ENCODE measurements at regions of chr19 and their contacts with region 1.

Region 1: GRCh38 chr19:10717356-10718204 is at the start of gene DNM2:
- DNase-seq: peak; percentile 99
- ATAC-seq: peak; percentile 93
- H3K4me3 Mint-ChIP-seq: peak within 1 kb of the TSS; percentile 98
- H3K27ac Mint-ChIP-seq: peak within 1 kb of the TSS; percentile 90
- H3K4me1 Mint-ChIP-seq: peaks cover 33% of the 10 kb centered on the region
- H3K27me3 Mint-ChIP-seq: no peaks in the 10 kb centered on the region
- total RNA-seq, gene DNM2: 267 to 315 TPM

Region 2: DNA sequence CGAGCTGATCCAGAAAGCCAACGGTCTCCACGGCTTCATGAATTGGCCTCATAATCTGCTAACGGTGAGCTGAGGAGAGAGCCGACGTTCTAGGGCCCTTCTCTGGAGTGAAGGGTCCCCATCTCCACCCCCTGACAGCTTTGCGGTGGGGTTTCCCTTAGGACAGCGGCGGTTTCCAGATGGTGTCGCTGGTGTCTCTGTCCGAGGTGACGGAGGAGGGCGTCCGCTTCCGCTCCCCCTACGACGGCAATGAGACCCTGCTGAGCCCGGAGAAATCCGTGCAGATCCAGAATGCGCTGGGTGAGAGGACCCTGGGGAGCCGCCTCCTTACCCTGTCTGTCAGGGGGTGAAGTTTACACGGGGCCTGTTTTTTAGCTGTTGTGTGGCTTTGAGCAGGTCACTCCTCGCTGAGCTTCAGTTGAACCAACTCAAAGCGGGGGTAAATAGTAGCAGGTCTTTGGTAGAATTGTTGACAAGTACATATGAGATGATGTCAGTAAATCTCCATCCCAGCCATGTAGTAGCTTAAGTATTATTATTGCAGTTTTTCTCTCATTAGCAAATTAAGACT is 15.5 kb before region 1 on chr19:
- CTCF ChIA-PET with region 1: interaction called, 26 read pairs
- DNase-seq: peak; percentile 62
- ATAC-seq: peak; percentile 35
- H3K4me3 Mint-ChIP-seq: peak overlapping the region; percentile 79
- H3K27ac Mint-ChIP-seq: peak overlapping the region; percentile 78
- H3K4me1 Mint-ChIP-seq: peaks cover 13% of the 10 kb centered on the region
- H3K27me3 Mint-ChIP-seq: peaks cover 7% of the 10 kb centered on the region

Region 3: GRCh38 chr19:10769533-10770491 is 52.2 kb after region 1 on chr19:
- CTCF ChIA-PET with region 1: interaction called, 32 read pairs
- DNase-seq: no peak
- ATAC-seq: no peak
- H3K4me3 Mint-ChIP-seq: no peak overlapping the region
- H3K27ac Mint-ChIP-seq: peak overlapping the region; percentile 6
- H3K4me1 Mint-ChIP-seq: peaks cover 31% of the 10 kb centered on the region
- H3K27me3 Mint-ChIP-seq: no peaks in the 10 kb centered on the region

Region 4: DNA sequence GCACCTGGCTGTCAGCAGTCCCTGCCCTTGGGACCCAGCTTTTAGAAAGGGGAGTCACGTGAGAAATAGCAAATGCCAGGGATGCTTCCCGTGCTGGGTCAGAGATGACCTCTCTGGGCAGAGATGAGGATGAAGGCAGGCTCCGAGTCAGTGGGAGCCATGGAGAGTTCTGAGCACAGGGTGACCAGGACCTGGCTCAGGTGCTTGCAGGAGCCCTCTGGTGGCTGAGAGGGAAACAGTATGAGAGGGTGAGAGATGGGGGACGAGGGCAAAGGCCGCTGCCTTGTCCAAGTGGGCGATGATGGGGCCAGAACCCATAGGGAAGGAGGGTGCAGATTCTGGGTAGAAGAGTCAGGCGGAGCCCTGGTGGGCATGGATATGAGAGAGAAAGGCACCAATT is 102.6 kb after region 1 on chr19:
- CTCF ChIA-PET with region 1: interaction called, 12 read pairs
- DNase-seq: no peak
- ATAC-seq: no peak
- H3K4me3 Mint-ChIP-seq: no peak overlapping the region
- H3K27ac Mint-ChIP-seq: no peak overlapping the region
- H3K4me1 Mint-ChIP-seq: peaks cover 28% of the 10 kb centered on the region
- H3K27me3 Mint-ChIP-seq: no peaks in the 10 kb centered on the region

Region 5: DNA sequence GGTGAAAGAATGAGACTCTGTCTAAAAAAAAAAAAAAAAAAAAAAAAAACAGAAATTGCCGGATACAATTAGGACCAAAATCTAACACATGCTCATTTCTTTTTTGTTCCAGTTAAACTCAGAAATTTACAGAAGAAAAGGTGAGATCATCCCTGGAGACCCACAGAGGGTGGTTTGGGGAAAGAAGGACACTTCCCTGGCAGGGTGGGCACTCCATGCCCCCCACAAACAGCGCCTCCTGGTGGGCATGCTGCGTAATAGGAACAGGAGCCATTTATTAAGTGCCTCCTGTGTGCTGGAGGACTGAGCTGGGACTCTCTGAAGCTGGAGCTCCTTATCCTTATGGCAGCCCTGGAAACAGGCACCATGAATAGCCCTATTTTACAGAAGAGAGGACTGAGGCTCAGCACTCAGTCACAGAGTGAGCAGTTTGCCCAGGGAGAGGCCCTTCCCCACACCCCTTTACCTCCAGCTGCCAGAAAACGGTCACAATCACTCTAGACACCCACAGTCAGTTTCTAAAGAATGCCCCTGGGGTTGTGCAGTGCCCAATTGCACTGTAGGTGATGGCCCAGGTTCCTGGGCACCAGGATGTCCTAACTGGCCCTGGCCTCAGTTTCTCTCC is 140.7 kb after region 1 on chr19:
- CTCF ChIA-PET with region 1: interaction called, 132 read pairs
- DNase-seq: peak; percentile 65
- ATAC-seq: peak; percentile 73
- H3K4me3 Mint-ChIP-seq: no peak overlapping the region
- H3K27ac Mint-ChIP-seq: no peak overlapping the region
- H3K4me1 Mint-ChIP-seq: peaks cover 6% of the 10 kb centered on the region
- H3K27me3 Mint-ChIP-seq: no peaks in the 10 kb centered on the region